Gastrocnemius medialis (tissue), 4 donors: ENCODE measurements at regions of chr9 and their contacts with region 1.

Region 1: DNA sequence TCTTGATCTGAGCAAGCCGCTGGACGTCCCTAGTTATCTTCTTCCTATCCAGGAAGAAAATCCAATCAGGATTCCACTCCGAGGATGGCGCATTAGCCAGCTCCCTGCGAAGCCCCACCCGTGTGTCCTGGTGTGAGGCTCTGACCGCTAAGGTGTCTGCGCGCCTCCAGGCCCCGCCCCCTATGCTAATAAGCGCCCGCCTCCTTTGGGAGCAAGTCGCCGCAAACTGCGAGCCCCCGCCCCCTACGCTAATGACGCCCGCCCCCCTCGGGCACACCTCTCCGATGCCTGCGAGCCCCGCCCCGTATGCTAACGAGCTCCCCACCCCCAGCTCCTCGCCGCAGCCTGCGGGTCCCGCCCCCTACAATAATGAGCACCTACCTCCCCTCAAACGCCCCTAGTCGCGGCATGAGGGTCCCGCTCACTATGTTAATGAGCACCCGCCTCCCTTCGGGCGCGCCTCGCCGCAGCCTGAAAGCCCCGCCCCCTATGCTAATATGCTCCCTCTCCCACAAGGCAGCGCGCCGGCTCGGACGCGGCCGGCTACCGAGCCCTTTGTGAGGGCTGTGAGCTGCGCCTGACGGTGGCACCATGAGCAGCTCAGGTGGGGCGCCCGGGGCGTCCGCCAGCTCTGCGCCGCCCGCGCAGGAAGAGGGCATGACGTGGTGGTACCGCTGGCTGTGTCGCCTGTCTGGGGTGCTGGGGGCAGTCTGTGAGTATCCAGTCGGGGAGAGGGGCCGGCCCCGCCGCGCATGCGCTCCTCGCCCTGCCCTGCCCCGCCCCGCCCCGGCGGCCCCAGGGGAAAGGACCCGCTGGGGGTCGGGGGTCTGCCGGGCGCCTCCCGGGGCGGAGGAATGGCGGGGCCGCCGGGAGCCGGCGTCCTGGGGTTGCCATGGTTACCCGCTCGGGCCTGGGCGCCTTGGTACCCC is at the start of gene CACFD1:
- DNase-seq: peak; percentile 96
- ATAC-seq: peak; percentile 91 to 94
- H3K4me3 ChIP-seq: peak within 1 kb of the TSS; percentile 75 to 97 (median 79)
- H3K27ac ChIP-seq: peak within 1 kb of the TSS; percentile 91 to 99 (median 92)
- H3K4me1 ChIP-seq: peaks cover 7 to 19% of the 10 kb centered on the region in 2 donors
- H3K27me3 ChIP-seq: no peaks in the 10 kb centered on the region
- CTCF ChIP-seq: no peak
- POLR2A ChIP-seq: peak; percentile 45 to 72
- total RNA-seq, gene CACFD1: 7.0 to 28.3 (median 10.1) TPM

Region 2: DNA sequence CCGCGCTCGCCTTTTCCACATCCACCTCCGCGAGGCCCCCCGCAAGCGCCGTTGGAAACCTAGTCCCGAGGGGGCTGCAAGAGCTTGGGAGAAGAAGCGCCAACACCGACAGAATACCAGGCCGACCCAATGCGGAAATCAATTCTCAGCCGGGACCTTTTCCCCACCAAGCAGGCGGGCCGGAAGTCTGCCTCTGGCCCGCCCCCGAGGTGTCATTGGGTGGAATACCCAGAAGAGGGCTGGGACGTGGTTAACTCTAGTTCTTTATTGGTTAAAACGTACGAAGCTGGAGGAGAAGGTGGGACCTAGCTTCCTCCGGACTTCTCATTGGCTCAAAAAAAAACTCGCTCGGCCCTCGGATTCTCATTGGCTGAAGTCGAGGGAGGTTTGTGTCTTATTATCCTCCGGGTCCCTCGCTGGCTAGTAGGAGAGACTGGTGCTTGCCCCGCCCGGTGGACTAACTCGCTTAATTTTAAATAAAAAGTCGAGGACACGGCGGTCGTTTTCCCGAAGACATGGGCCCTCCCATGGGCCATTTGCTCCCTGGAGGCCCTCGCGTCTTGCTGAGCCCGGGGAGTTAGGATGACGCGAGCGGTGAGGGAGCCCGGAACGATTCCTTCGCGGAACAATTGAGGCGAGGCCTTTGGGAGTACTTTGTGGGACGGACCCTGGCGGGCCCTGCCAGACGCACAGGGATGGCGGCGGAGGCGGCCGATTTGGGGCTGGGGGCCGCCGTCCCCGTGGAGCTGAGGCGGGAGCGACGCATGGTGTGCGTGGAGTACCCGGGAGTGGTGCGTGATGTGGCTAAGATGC is 429.2 kb before region 1 on chr9 and contains the start of gene GTF3C5:
- in situ Hi-C with region 1: no loop called
- intact Hi-C with region 1: loop called (anchors 10 kb)
- DNase-seq: peak; percentile 92 to 94
- ATAC-seq: peak; percentile 99
- H3K4me3 ChIP-seq: peak within 1 kb of the TSS; percentile 85 to 97 (median 93)
- H3K27ac ChIP-seq: peak within 1 kb of the TSS; percentile 93 to 94 (median 94)
- H3K4me1 ChIP-seq: peaks cover 32 to 43% of the 10 kb centered on the region in 2 donors
- H3K27me3 ChIP-seq: no peaks in the 10 kb centered on the region
- CTCF ChIP-seq: peak in 2 of 5 experiments; percentile 16 to 30
- POLR2A ChIP-seq: peak; percentile 65 to 76
- total RNA-seq, gene GTF3C5: 48.1 to 55.3 (median 51.5) TPM

Region 3: DNA sequence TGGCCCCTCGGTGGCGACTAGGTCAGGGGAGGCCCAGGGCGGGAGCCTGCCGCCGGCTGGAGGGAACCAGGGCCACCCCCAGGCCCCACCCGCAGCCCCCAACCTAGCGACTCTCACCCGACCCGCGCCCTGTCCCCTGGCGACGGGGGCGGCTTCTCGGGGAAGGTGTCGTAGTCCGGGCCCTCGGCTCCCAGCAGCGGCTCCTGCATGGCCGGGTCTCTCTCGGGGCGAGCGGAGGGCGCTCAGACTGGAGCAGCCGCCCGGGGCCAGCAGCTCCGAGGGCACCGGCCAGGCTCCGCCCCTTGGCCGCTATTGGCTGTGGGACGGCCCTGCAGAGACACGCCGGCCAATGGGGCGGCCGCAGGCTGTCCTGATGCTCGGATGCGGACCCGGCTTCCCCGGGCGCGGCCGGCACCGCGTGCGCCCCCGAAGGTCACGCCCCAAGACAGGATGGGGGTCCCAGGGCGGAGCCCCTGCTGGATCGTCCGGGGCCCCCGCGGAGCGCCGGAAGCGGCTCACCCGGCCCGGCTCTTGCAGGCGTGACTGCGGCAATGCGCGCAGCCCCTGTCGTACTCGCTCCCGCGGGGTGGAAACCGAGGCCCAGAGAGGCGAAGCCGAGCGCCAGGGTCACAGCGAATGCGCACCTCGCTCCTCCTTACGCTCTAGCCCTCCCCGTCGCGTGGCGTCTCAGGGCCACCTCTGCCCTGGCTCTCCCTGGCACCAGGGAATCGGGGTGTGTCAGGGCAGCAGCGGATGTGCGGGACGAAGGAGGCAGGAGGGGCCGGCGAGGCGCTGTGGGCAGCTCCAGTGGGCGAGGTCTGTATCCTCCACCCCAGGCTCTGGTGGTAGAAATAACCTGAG is 19.3 kb after region 1 on chr9 and contains the start of gene SLC2A6:
- in situ Hi-C with region 1: no loop called
- intact Hi-C with region 1: loop called (anchors 1 kb)
- DNase-seq: peak; percentile 67 to 77
- ATAC-seq: peak; percentile 90 to 92
- H3K4me3 ChIP-seq: peak within 1 kb of the TSS; percentile 56 to 69 (median 62)
- H3K27ac ChIP-seq: peak within 1 kb of the TSS; percentile 52 to 74 (median 68)
- H3K4me1 ChIP-seq: peaks cover 4 to 14% of the 10 kb centered on the region in 2 donors
- H3K27me3 ChIP-seq: no peaks in the 10 kb centered on the region
- CTCF ChIP-seq: no peak
- POLR2A ChIP-seq: peak; percentile 33 to 37
- total RNA-seq, gene SLC2A6: 0.41 to 2.4 (median 1.4) TPM